Activated CD4-positive, alpha-beta T cell treated with anti-CD3 and anti-CD28 coated beads for 36 hours (primary cell): ENCODE measurements at regions of chr3 and their contacts with region 1.

Region 1: DNA sequence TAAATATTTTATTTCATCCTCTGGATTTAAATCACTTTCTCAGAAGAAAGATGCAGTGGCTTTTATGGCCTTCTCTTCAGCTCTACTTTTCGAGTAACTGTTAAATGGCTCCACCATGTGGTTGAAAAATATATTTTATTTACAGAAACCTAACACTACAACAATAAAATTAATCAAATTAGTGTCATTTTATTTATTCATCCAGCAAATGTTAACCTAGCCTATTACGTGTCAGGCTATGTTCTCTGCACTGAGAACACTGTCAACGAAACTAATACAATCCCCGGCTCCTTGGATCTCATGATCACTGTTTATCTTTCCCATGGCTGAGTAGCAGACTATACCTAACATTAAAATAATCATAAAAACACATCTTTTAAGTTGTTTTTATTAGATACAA is 148.0 kb upstream of the OSTN start:
- DNase-seq: no peak
- ATAC-seq: no peak
- H3K4me3 Mint-ChIP-seq: no peak overlapping the region
- H3K27ac Mint-ChIP-seq: no peak overlapping the region
- H3K4me1 Mint-ChIP-seq: no peaks in the 10 kb centered on the region
- H3K27me3 Mint-ChIP-seq: peaks cover 2% of the 10 kb centered on the region

Region 2: GRCh38 chr3:189967254-189967865 is 1083.7 kb before region 1 on chr3:
- CTCF ChIA-PET with region 1: no interaction called
- POLR2A ChIA-PET with region 1: no interaction called
- intact Hi-C with region 1: loop called in 1 of 2 experiments (anchors 2 kb)
- DNase-seq: no peak
- ATAC-seq: no peak
- H3K4me3 Mint-ChIP-seq: no peak overlapping the region
- H3K27ac Mint-ChIP-seq: no peak overlapping the region
- H3K4me1 Mint-ChIP-seq: peaks cover 2% of the 10 kb centered on the region
- H3K27me3 Mint-ChIP-seq: peaks cover 7% of the 10 kb centered on the region

Region 3: DNA sequence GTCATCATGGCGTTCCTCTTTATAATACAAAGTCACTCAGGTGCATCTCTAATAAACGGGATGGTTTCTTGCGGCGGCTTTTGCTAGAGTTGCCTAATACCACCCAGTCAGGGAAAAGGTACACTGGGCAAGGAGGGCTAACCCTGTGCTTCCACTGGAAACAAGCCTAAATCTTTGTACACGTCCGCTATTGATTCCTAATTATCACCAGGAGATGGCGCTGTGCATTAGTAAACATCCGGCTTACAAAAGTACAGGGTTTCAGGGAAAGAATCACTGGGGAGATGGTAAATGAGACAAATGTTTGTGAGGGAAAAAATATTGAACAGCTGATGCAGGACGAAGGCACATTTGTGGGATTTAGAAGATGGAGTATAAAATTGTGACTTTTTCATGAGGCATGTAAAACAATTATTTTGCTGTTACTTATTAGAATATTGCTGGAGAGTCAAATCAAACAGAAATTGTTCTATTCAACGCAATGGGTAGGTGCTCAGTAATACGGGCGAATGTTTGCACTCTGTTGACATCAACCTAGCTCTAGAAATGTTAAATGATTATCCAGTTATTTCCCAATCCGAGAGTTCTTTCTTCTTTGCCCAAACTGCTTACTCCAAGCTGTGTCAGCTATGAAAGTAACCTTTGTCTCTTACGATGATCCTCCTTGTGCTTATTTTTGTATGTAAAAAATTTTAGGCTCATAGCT is 239.1 kb before region 1 on chr3:
- CTCF ChIA-PET with region 1: no interaction called
- POLR2A ChIA-PET with region 1: no interaction called
- intact Hi-C with region 1: loop called (anchors 5 kb)
- DNase-seq: peak; percentile 24
- ATAC-seq: no peak
- H3K4me3 Mint-ChIP-seq: no peak overlapping the region
- H3K27ac Mint-ChIP-seq: no peak overlapping the region
- H3K4me1 Mint-ChIP-seq: no peaks in the 10 kb centered on the region
- H3K27me3 Mint-ChIP-seq: peaks cover 9% of the 10 kb centered on the region

Region 4: GRCh38 chr3:190883973-190884832 is 166.8 kb before region 1 on chr3:
- CTCF ChIA-PET with region 1: interaction called, 13 read pairs
- POLR2A ChIA-PET with region 1: no interaction called
- intact Hi-C with region 1: loop called (anchors 1 to 2 kb)
- DNase-seq: peak; percentile 56
- ATAC-seq: no peak
- H3K4me3 Mint-ChIP-seq: no peak overlapping the region
- H3K27ac Mint-ChIP-seq: no peak overlapping the region
- H3K4me1 Mint-ChIP-seq: no peaks in the 10 kb centered on the region
- H3K27me3 Mint-ChIP-seq: peaks cover 13% of the 10 kb centered on the region

Region 5: DNA sequence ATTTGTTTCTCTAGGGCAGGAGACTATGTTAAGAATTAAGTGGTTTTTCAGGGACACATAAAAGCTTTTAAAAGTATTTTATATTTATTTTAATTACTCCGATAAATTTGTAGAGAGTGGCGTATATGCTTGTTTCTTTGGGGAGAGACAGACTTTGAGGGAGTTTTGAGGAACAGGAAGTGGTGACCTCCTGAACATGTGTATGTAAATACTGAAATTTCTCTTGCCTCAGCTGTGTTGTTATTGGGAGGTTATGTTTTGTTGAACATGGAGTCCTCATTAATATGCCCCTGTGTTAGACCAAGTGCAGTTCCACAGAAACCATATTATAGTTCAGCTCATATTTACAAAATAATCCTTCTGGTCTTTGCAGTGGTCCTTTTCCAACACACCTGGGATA is 321.1 kb after region 1 on chr3:
- CTCF ChIA-PET with region 1: no interaction called
- POLR2A ChIA-PET with region 1: no interaction called
- intact Hi-C with region 1: no loop called
- DNase-seq: no peak
- ATAC-seq: no peak
- H3K4me3 Mint-ChIP-seq: no peak overlapping the region
- H3K27ac Mint-ChIP-seq: no peak overlapping the region
- H3K4me1 Mint-ChIP-seq: peaks cover 5% of the 10 kb centered on the region
- H3K27me3 Mint-ChIP-seq: no peaks in the 10 kb centered on the region